Activated B cell treated with CpG ODN at 0.5 μM for 24 hours (primary cell): ENCODE measurements at regions of chr19 and their contacts with region 1.

Region 1: DNA sequence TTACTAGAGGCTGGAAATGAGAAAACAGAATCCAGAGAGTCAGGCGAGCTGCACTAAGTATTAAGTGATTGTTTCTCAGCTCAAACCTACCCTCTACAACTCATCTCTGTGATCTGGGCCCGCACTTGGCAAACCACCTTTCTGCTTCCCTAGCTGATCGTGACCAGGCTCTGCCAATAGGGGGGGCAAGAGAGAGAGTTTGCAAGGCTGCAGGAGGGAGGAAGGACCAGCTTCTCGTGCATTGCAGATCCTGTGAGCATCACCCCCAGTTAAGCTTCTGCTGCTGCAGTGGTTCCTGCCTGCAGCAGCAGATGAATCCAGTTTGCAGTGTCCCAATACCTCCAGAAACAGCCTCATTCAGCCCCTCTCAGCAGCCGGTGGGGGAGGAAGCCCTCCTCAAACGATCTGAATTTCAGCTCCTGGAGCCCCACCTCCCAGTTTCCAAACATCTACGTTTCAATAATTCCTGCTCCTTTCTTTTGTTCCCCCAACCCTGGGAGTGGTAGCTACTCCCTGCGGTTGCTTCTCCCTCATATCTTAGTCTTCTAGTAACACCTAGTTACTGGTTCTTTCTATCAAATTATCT is 20.0 kb downstream of the XRCC1 start:
- DNase-seq: peak; percentile 55
- ATAC-seq: peak; percentile 98
- H3K4me3 Mint-ChIP-seq: no peak overlapping the region
- H3K27ac Mint-ChIP-seq: no peak overlapping the region
- H3K4me1 Mint-ChIP-seq: peaks cover 13% of the 10 kb centered on the region
- H3K27me3 Mint-ChIP-seq: no peaks in the 10 kb centered on the region
- CTCF ChIP-seq: no peak

Region 2: GRCh38 chr19:43532962-43533545 is 22.2 kb before region 1 on chr19 and contains the start of gene ZNF575:
- CTCF ChIA-PET with region 1: interaction called, 18 read pairs
- POLR2A ChIA-PET with region 1: interaction called, 3 read pairs
- intact Hi-C with region 1: loop called (anchors 1 kb)
- DNase-seq: peak; percentile 77
- ATAC-seq: peak; percentile 45
- H3K4me3 Mint-ChIP-seq: peak within 1 kb of the TSS; percentile 97
- H3K27ac Mint-ChIP-seq: peak within 1 kb of the TSS; percentile 98
- H3K4me1 Mint-ChIP-seq: peaks cover 19% of the 10 kb centered on the region
- H3K27me3 Mint-ChIP-seq: no peaks in the 10 kb centered on the region
- CTCF ChIP-seq: no peak
- total RNA-seq, gene ZNF575: 1.9 and 3.4 TPM in 2 replicates

Region 3: DNA sequence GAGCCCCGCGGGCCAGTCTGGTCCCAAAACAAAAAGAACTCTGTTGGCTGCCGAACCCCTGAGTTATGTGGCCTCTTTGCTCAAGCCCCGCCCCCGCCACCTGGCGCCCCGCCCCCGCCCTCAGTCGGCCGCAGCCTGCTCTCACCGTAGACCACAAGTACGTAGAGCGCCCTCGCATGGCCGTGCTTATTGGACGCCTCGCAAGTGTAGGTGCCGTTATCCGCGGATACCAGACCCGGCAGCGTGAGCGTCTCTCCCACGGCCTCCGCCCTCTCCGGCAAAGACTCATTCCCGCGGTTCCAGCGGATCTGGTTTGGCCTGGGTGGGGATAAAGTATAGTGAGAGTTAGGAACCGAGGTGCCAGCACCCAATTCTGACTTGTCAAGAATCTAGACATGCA is 69.7 kb after region 1 on chr19:
- CTCF ChIA-PET with region 1: interaction called, 3 read pairs
- POLR2A ChIA-PET with region 1: no interaction called
- intact Hi-C with region 1: loop called (anchors 1 kb)
- DNase-seq: peak; percentile 59
- ATAC-seq: peak; percentile 84
- H3K4me3 Mint-ChIP-seq: no peak overlapping the region
- H3K27ac Mint-ChIP-seq: no peak overlapping the region
- H3K4me1 Mint-ChIP-seq: peaks cover 19% of the 10 kb centered on the region
- H3K27me3 Mint-ChIP-seq: peaks cover 4% of the 10 kb centered on the region
- CTCF ChIP-seq: no peak

Region 4: GRCh38 chr19:43743022-43743421 is 187.7 kb after region 1 on chr19:
- CTCF ChIA-PET with region 1: interaction called, 7 read pairs
- POLR2A ChIA-PET with region 1: no interaction called
- intact Hi-C with region 1: loop called (anchors 10 kb)
- DNase-seq: no peak
- ATAC-seq: no peak
- H3K4me3 Mint-ChIP-seq: no peak overlapping the region
- H3K27ac Mint-ChIP-seq: no peak overlapping the region
- H3K4me1 Mint-ChIP-seq: peaks cover 22% of the 10 kb centered on the region
- H3K27me3 Mint-ChIP-seq: no peaks in the 10 kb centered on the region
- CTCF ChIP-seq: no peak